Activated CD4-positive, alpha-beta T cell treated with anti-CD3 and anti-CD28 coated beads, Interleukin-2, amount 10 ng/mL, durations not matched to agents 7 days and 5 days (primary cell): ENCODE measurements at regions of chr6 and their contacts with region 1.

Region 1: GRCh38 chr6:32195652-32195901 is 3.1 kb upstream of the GPSM3 start:
- DNase-seq: peak; percentile 100
- H3K4me3 Mint-ChIP-seq: peak overlapping the region; percentile 91
- H3K27ac Mint-ChIP-seq: peak overlapping the region; percentile 99
- H3K4me1 Mint-ChIP-seq: peaks cover 31% of the 10 kb centered on the region
- H3K27me3 Mint-ChIP-seq: no peaks in the 10 kb centered on the region

Region 2: DNA sequence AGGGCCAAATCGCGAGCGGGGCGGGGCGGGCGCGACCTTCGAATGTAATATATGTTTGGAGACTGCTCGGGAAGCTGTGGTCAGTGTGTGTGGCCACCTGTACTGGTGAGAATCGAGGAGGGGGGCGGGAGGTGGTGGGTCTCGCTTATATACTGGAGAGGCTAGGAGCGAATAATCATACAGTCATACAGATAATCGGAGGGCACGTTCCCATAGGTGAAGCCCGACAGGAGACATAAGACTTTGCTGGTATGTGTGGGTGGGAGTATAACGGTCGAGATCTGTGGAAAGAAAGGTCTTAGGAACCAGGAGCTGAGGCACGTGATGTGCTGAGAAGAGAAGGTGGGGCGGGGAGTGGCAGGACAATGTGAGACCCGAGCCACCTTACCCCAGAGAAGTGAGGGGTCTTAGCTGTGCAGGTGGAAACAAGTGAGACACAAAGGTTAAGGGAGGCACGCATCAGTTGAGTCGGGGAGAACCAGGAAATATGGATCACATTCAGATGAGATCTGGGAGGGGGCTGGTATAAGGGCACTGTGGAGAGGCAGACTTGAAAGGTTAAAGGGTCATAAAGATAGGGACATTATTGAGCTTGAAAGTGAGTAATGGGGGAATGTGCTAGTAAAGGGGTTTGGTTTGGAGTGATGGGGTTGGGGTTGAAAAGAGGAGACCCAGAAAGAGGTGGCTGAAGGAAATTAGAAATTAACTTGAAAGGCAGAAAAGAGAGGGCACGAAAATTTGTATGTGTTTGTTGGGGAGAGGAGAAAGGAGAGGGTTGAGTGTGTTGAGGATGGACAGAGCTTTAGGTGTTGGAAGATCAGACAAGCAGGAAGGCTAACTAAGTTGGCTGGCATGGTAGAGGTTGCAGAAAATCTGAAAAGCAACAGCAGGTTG is 16.8 kb before region 1 on chr6:
- CTCF ChIA-PET with region 1: interaction called, 10 read pairs
- POLR2A ChIA-PET with region 1: no interaction called
- DNase-seq: no peak
- H3K4me3 Mint-ChIP-seq: peak overlapping the region; percentile 90
- H3K27ac Mint-ChIP-seq: peak overlapping the region; percentile 89
- H3K4me1 Mint-ChIP-seq: peaks cover 61% of the 10 kb centered on the region
- H3K27me3 Mint-ChIP-seq: no peaks in the 10 kb centered on the region